Posterior vena cava (tissue), 2 donors: ENCODE measurements at regions of chr3 and their contacts with region 1.

Region 1: DNA sequence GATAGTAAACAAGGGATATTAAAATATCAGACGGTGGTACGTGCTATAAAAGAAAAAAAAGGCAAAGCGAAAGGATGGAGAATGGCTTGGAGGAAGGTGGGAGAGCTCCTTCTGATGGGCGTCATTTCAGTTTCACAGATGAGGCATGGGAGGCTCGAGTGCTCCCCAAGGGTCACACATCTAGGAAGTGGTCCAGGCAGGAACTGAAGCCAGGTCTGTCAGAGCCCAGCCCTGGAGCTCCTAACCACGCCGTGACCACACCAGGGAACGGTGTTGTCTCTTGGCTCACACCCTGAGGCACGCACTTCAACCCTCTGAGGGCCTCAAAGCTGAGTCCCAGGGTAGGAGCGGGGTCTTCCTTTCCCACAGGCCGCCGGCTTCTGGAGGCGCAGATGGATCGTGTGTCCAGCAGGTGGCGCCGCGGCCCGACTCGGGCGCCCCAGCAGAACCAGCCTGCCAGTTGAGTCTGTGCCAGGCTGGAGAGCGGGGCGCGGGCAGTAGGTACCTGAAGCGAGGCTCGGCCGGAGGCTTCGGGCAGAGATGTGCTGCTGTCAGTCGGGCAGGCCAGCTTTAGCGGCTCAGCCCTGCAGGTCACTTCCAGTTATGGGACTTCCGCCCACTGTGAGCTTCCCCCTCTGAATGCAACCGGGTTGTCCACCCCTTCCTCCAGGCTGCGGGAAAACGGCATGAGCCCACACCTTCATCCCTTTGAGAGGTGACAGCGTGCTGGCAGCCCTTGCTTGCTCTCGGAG is 68.1 kb downstream of the SLC6A1 start:
- DNase-seq: peak; percentile 88

Region 2: DNA sequence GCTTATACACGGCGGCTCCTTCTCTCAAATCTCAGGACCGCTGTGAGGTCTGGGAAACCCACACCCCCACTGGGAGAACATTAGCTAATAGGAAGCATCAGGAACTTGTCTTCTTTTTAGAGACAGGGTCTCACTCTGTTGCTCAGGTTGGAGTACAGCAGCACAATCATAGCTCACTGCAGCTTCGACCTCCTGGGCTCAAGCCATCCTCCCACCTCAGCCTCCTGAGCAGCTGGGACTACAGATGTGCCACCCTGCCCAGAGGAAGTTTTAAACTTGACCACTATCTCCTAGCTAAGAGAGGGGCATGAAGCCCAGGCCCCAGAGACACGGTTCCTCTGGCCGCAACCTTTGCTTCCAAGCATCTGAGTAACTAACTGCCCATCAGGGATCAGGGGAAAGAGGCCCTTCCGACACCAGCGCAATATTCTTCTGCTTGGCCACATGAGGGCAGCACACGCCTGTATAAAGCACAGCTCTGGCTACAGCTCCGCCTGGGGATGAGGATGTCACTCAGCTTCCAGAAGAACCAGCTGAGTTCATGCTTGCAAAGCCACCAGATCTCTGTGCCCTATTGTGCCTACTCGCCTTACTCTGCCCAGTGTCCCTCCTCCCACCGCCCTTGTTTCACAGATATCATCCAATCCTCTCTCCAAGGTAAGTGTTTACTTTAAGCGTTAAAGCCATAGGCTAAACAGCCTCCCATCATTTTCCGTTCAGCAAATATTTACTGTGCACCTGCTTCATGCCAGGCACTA is 302.2 kb before region 1 on chr3:
- intact Hi-C with region 1: loop called (anchors 5 to 10 kb)
- DNase-seq: no peak

Region 3: GRCh38 chr3:10945683-10946287 is 114.9 kb before region 1 on chr3:
- intact Hi-C with region 1: loop called (anchors 5 kb)
- DNase-seq: peak; percentile 89

Region 4: GRCh38 chr3:11021611-11022011 is 39.1 kb before region 1 on chr3:
- intact Hi-C with region 1: loop called in 1 of 2 experiments (anchors 1 kb)
- DNase-seq: peak; percentile 42

Region 5: GRCh38 chr3:11045536-11045935 is 15.1 kb before region 1 on chr3:
- intact Hi-C with region 1: loop called in 1 of 2 experiments (anchors 1 kb)
- DNase-seq: no peak

Region 6: DNA sequence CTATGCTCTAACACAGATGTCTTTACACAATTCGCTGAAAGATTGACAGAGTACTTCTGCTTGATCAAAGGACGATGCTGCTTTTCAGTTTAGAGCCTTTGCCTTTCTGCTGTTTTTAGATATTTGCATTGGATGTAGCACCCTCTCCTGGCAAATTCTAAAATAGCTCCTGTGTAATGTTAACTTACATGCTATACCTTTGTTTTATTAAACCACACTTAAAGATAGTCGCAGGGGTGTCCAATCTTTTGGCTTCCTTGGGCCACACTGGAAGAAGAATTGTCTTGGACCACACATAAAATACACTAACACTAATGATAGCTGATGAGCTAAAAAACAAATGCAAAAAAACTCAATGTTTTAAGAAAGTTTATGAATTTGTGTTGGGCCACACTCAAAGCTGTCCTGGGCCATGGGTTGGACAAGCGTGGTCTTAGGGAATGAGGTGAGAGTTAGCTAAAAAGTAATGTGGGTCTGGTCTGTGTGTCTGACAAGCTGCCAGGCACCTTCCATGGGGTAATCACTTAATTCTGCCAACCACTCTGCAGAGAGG is 274.5 kb after region 1 on chr3:
- intact Hi-C with region 1: loop called (anchors 10 kb)
- DNase-seq: no peak